ENCODE measurements at regions of chr2 and their contacts with region 1.

Region 1: GRCh38 chr2:3558205-3559014 is at the start of gene RNASEH1:
- DNase-seq: peak; percentile 93
- H3K4me3 ChIP-seq: peak within 1 kb of the TSS; percentile 91
- CTCF ChIP-seq: no peak

Region 2: DNA sequence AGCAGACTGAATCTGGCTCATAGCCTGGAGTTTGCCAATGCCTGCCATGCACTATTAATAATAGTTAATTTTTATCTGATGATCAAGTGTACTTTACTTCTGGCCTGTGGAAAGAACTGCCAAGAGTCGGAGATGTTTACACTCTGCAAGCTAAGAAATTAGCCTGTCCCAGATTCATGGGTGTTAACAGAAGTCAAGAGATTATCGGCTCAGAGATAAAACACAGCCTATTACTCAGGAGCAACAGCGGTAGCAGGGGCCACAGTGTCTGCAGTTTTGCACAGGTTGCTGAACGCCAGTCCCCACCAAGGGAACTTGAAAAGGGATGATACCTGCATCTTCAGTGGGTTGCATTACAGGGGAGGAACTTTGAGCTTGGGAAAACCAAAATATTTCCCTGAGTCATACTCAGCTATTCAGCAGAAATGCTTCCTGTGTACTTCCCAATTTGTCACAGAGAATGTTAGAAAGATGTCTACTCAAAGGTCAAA is 34.8 kb before region 1 on chr2:
- CTCF ChIA-PET with region 1: interaction called, 4 read pairs
- POLR2A ChIA-PET with region 1: interaction called, 10 read pairs
- DNase-seq: no peak
- H3K4me3 ChIP-seq: peak overlapping the region; percentile 15; the same call in 1 of the 2 replicates
- CTCF ChIP-seq: no peak

Region 3: GRCh38 chr2:3536682-3537632 is 21.5 kb before region 1 on chr2:
- CTCF ChIA-PET with region 1: interaction called, 4 read pairs
- POLR2A ChIA-PET with region 1: interaction called, 10 read pairs
- DNase-seq: no peak
- H3K4me3 ChIP-seq: peak overlapping the region; percentile 58
- CTCF ChIP-seq: peak; percentile 54

Region 4: GRCh38 chr2:3575534-3576262 is 17.3 kb after region 1 on chr2:
- CTCF ChIA-PET with region 1: interaction called, 3 read pairs
- POLR2A ChIA-PET with region 1: interaction called, 10 read pairs
- DNase-seq: no peak
- H3K4me3 ChIP-seq: peak overlapping the region; percentile 95
- CTCF ChIP-seq: no peak